Activated CD8-positive, alpha-beta T cell treated with anti-CD3 and anti-CD28 coated beads, Interleukin-2, amount 10 ng/mL, durations not matched to agents 7 days and 5 days (primary cell): ENCODE measurements at regions of chr15 and their contacts with region 1.

Region 1: DNA sequence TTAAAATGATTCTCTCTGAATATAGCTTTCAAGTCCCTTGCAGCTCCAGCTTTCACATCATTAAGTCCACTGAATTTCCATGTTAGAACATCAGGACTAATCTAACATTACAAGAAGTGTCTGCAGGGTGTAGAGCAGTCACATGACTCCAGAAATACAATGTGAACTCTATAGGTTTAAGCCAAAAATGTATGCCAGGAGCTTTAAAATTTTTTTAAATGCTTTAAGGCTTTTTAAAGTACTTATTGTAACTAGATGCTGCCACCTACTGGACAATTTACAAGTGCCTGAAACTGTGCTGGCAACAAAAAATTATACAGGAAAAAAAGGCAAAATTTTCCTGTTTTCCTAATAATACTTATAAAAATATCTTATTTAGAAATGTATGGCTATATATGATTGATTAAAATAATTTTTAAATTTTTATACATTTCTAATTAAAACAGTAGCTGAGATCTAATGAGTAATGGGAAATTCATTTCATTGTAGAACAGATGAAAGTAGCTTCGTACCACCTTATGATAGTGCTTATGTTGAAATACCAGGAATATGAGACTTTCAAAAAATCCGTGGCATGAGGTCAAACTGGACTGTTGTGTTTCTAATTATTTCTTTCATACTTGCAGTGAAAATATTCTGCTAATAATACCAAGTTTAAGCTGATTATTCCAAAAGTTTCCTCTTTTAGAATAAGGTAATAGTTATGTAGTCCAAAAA is 25.7 kb downstream of the FSIP1 start:
- DNase-seq: peak; percentile 47
- ATAC-seq: no peak
- H3K4me3 Mint-ChIP-seq: no peak overlapping the region
- H3K27ac Mint-ChIP-seq: no peak overlapping the region
- H3K4me1 Mint-ChIP-seq: no peaks in the 10 kb centered on the region
- H3K27me3 Mint-ChIP-seq: peaks cover 51% of the 10 kb centered on the region

Region 2: GRCh38 chr15:39580117-39580484 is 176.9 kb before region 1 on chr15:
- CTCF ChIA-PET with region 1: interaction called, 179 read pairs
- POLR2A ChIA-PET with region 1: no interaction called
- DNase-seq: peak; percentile 93
- ATAC-seq: peak; percentile 96
- H3K4me3 Mint-ChIP-seq: peak overlapping the region; percentile 66
- H3K27ac Mint-ChIP-seq: no peak overlapping the region
- H3K4me1 Mint-ChIP-seq: peaks cover 36% of the 10 kb centered on the region
- H3K27me3 Mint-ChIP-seq: peaks cover 53% of the 10 kb centered on the region

Region 3: GRCh38 chr15:39624806-39625205 is 132.2 kb before region 1 on chr15:
- CTCF ChIA-PET with region 1: interaction called, 37 read pairs
- POLR2A ChIA-PET with region 1: no interaction called
- DNase-seq: peak; percentile 83
- ATAC-seq: peak; percentile 79
- H3K4me3 Mint-ChIP-seq: peak overlapping the region; percentile 62
- H3K27ac Mint-ChIP-seq: peak overlapping the region; percentile 97
- H3K4me1 Mint-ChIP-seq: peaks cover 85% of the 10 kb centered on the region
- H3K27me3 Mint-ChIP-seq: no peaks in the 10 kb centered on the region

Region 4: DNA sequence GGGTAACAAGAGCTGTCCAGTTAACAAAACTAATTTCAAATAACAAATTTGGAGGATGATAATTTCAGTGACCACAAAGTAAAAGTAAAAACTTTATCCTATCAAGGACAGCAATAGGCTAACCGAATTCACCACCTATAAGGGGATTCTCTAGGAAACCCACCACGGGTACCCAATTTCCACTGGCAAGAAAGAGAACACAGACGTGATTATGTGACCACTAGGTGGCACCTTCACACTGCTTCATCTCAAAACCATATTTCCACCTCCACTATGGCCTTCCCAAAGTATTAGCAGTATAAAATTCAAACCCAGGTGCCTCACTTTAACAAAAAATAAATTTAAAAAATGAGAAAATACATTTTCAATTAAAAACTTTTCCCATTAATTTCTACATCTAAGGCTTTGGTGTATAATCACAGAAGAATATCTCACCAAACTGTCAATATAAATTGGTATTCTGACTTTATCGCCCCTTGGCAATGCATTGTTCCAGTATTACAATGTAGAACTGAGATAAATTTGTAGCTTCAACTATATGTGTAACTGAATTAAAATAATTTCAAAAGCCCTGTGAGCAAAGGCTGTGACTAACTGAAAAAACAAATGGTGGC is 70.9 kb before region 1 on chr15:
- CTCF ChIA-PET with region 1: interaction called, 102 read pairs
- POLR2A ChIA-PET with region 1: no interaction called
- DNase-seq: peak; percentile 53
- ATAC-seq: no peak
- H3K4me3 Mint-ChIP-seq: no peak overlapping the region
- H3K27ac Mint-ChIP-seq: no peak overlapping the region
- H3K4me1 Mint-ChIP-seq: peaks cover 13% of the 10 kb centered on the region
- H3K27me3 Mint-ChIP-seq: peaks cover 13% of the 10 kb centered on the region

Region 5: DNA sequence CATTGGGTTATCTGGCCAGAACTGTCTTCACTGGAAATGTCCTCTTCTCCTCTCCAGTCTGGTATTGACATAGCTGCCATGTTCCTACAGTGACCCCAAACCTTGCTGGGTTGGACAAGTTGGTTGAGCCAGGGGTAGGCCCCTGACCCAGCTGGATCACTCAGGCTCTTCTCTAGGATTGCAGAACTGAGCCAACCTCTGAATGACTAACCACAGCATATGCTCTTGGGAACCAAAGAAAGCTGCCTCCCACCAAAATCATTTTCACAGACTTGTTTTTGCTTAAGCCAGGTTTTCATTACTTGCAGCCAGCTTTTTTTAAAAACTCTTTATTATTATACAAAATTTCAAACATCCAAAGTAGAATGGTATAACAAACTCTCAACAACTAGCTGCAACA is 15.7 kb before region 1 on chr15:
- CTCF ChIA-PET with region 1: interaction called, 27 read pairs
- POLR2A ChIA-PET with region 1: no interaction called
- DNase-seq: no peak
- ATAC-seq: no peak
- H3K4me3 Mint-ChIP-seq: no peak overlapping the region
- H3K27ac Mint-ChIP-seq: no peak overlapping the region
- H3K4me1 Mint-ChIP-seq: peaks cover 5% of the 10 kb centered on the region
- H3K27me3 Mint-ChIP-seq: peaks cover 30% of the 10 kb centered on the region

Region 6: DNA sequence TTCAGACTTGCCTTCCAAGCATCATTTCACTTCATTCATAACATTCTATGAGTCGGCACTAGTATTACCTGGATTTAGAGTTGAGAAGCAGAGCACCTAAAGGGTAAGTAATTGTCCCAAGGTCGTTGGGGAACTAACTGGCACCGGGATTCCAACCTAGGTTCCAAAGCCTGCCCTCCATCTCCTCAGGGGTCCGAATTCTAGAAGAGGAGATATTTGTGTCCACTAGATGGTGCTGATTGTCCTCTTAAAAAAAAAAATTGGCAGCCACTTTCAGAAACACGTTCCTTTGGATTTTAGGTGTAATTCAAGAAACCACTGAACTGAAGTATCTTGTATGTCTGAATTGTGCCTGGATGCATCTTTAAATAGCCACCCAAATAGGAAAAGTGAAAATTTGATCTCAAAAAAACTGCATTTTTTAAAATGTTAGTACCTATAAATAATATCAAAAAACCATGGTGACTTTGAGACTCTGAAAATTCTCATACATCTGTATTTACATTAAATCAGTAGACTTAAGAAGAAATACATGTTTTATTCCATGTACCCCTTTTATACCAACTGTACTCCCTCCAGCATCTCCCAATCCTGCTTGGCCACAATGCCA is 29.6 kb after region 1 on chr15:
- CTCF ChIA-PET with region 1: interaction called, 10 read pairs
- POLR2A ChIA-PET with region 1: no interaction called
- DNase-seq: no peak
- ATAC-seq: no peak
- H3K4me3 Mint-ChIP-seq: no peak overlapping the region
- H3K27ac Mint-ChIP-seq: no peak overlapping the region
- H3K4me1 Mint-ChIP-seq: peaks cover 49% of the 10 kb centered on the region
- H3K27me3 Mint-ChIP-seq: no peaks in the 10 kb centered on the region